ENCODE measurements at regions of chr14 and their contacts with region 1.

Region 1: GRCh38 chr14:68843471-68844209 is 50.8 kb upstream of the ZFP36L1 start:
- H3K4me3 ChIP-seq: peak overlapping the region; percentile 6; the same call in 1 of the 2 replicates
- H3K27ac ChIP-seq: no peak overlapping the region; the same call in 1 of the 2 replicates
- H3K4me1 ChIP-seq: 0 out of 2 replicates have a peak, but pooled peaks cover 3% of the 10 kb centered on the region
- CTCF ChIP-seq: peak; percentile 74

Region 2: DNA sequence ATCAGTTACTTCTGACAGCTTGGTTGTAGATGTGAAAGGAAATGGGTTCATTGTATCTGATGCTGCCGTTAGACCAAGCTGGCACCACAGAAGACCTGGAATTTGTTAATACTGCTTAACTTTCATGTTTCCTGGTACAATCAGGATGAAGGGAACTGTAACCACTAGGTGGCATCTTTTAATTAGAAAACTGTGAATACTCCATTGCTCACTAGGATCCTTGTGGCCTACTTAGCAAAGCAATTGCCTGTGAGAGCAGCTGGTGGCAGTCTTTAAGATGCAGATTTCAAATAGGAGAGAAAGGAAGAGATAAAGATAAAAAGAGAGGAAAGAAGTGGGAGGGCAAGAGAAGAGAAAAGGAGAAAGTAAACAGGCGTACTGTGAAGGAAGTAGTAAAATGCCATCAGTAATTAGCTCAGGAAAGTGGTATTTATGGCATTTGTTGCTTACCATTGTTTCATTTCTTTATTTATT is 909.6 kb before region 1 on chr14:
- CTCF ChIA-PET with region 1: interaction called, 14 read pairs
- POLR2A ChIA-PET with region 1: no interaction called
- H3K4me3 ChIP-seq: no peak overlapping the region
- H3K27ac ChIP-seq: no peak overlapping the region
- H3K4me1 ChIP-seq: peaks cover 8% of the 10 kb centered on the region
- CTCF ChIP-seq: peak; percentile 83

Region 3: DNA sequence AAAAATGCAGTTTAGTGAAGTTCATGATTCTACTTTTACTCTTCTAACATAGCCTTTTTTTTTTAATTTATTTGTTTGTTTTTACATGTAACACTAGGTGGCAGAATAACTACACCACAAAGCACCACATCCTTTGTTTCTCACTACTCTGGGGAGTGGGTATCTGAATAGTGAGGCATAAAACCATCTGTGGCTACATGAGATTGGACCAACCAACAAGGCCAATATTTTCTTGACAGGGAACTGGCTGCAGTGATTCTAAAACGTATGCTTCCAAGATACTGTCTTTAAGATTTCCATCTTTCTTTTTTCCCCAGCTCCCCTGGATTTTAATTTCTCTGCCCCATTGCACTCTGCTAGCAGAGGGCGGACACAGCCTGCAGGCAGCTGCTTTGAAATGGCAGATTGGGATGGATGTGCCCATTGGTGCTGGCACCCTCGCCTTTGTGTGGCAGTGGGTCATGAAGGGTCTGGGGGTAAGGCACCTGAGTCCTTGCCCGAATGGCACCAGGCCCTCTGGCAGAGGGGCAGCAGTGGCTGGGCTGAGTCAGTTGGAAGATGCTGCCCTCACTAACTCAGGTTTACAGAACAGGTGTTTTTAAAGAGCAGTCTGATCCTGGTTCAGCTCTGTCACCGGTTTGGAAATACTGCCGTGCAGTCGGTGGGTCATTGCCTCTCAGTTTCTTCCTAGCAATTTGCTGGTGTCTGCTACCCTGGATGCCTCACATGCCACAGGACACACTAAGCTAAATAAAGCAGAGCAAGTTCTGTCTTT is 595.0 kb before region 1 on chr14:
- CTCF ChIA-PET with region 1: interaction called, 13 read pairs
- POLR2A ChIA-PET with region 1: no interaction called
- H3K4me3 ChIP-seq: no peak overlapping the region
- H3K27ac ChIP-seq: peak overlapping the region; percentile 62; the same call in 1 of the 2 replicates
- H3K4me1 ChIP-seq: peaks cover 39% of the 10 kb centered on the region
- CTCF ChIP-seq: no peak

Region 4: DNA sequence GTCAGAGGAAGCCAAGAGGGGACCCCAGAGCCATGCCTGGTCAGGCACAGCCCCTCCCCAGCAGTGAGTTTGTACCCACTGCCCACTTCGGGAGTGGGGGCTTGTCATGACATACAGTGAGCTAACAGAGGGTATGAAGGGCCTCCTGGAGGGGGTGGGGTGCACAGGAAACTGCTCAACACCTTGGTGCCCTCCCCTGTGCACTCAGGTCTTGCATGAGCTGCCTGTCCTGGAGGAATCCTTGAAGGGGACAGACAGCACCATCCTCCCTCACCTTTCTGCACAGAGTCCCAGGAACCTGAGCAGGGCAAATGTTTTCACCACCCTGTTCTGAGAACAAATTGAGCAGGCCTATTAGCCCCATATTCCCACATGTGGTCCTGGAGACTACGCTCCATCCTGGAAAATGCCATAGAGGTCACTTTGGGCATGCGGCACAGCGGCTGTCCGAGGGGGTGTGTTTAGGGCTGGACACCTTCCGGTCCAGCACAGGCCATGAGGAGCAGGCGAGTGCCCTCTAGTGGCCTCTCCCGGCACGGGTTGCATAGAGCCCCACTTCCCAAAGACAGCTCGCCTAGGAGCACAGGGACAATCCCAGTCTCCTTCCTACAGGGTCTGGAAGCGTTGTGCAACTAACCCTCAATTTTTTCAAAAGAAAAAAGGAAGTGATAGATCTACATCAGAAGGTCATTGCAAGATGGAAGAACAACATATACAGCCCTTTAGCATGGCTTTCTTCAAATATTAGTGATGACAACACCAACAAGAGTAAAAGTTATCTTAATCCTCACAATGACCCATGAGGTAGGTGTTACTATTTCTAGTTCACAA is 18.9 kb before region 1 on chr14:
- CTCF ChIA-PET with region 1: interaction called, 45 read pairs
- POLR2A ChIA-PET with region 1: no interaction called
- H3K4me3 ChIP-seq: no peak overlapping the region
- H3K27ac ChIP-seq: no peak overlapping the region; the same call in 1 of the 2 replicates
- H3K4me1 ChIP-seq: peaks cover 2% of the 10 kb centered on the region; the same call in 1 of the 2 replicates
- CTCF ChIP-seq: peak; percentile 75; the same call in 1 of the 2 replicates